PC-3 (cell line): ENCODE measurements at regions of chr4 and their contacts with region 1.

Region 1: GRCh38 chr4:13907255-13907751 is 279.8 kb upstream of the BOD1L1 start:
- DNase-seq: peak; percentile 91
- ATAC-seq: peak; percentile 95
- H3K4me3 ChIP-seq: 0 out of 2 replicates have a peak overlapping the region, but pooled peaks have one; percentile 18
- H3K27ac ChIP-seq: peak overlapping the region; percentile 99
- H3K4me1 ChIP-seq: peaks cover 51% of the 10 kb centered on the region
- H3K27me3 ChIP-seq: no peaks in the 10 kb centered on the region
- CTCF ChIP-seq: peak; percentile 72

Region 2: GRCh38 chr4:13700196-13701140 is 206.8 kb before region 1 on chr4:
- CTCF ChIA-PET with region 1: interaction called, 3 read pairs
- POLR2A ChIA-PET with region 1: interaction called, 3 read pairs
- intact Hi-C with region 1: loop called (anchors 1 kb)
- DNase-seq: peak; percentile 92
- ATAC-seq: peak; percentile 46
- H3K4me3 ChIP-seq: peak overlapping the region; percentile 33; the same call in 1 of the 2 replicates
- H3K27ac ChIP-seq: peak overlapping the region; percentile 96
- H3K4me1 ChIP-seq: peaks cover 62% of the 10 kb centered on the region
- H3K27me3 ChIP-seq: no peaks in the 10 kb centered on the region
- CTCF ChIP-seq: no peak

Region 3: GRCh38 chr4:13881892-13882291 is 25.4 kb before region 1 on chr4:
- CTCF ChIA-PET with region 1: interaction called, 12 read pairs
- POLR2A ChIA-PET with region 1: no interaction called
- intact Hi-C with region 1: no loop called
- DNase-seq: no peak
- ATAC-seq: no peak; the same call in 1 of the 2 replicates
- H3K4me3 ChIP-seq: no peak overlapping the region
- H3K27ac ChIP-seq: no peak overlapping the region
- H3K4me1 ChIP-seq: no peaks in the 10 kb centered on the region
- H3K27me3 ChIP-seq: no peaks in the 10 kb centered on the region
- CTCF ChIP-seq: no peak; the same call in 1 of the 2 replicates

Region 4: DNA sequence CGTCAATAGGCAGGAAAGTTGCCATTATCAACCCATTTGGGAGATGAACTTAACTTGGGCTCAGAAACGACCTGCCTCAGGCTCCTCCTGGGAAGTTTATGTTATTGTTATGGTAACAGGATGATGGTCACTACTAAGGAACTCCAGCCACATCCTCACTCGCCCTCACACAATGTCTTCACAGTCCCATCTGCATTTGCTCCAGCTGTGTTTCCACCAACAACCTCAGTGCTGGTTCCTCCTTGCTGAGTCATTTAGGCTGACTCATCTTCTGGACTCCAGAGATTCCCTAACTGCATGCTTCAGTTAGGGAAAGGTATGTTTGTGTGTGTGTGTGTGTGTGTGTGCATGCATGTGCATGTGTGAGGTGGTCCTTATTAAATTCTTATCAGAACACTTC is 13.6 kb after region 1 on chr4:
- CTCF ChIA-PET with region 1: no interaction called
- POLR2A ChIA-PET with region 1: interaction called, 5 read pairs
- intact Hi-C with region 1: loop called (anchors 2 kb)
- DNase-seq: peak; percentile 97
- ATAC-seq: peak; percentile 97
- H3K4me3 ChIP-seq: no peak overlapping the region
- H3K27ac ChIP-seq: peak overlapping the region; percentile 93
- H3K4me1 ChIP-seq: peaks cover 23% of the 10 kb centered on the region
- H3K27me3 ChIP-seq: no peaks in the 10 kb centered on the region
- CTCF ChIP-seq: no peak

Region 5: DNA sequence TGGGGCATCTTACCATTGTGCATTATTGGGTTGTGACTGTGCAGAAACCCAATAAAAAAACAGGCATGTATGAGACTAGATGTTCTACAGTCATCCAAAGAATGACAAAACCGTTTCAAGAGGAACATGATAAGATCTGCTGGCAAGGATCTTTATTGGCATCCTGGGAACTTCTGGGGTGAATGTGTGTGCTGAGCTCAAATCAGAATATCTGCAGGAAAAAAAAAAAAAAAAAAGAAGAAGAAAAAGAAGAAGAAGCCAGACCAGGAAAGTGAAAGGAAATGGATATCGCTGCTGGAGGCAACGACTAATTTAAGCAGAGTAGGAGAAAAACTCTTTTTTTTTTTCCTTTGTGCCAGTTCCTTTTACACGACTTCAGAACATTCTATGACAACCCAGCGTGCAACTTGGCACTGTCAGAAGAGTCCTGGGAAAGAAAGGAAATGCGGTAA is 204.5 kb after region 1 on chr4:
- CTCF ChIA-PET with region 1: no interaction called
- POLR2A ChIA-PET with region 1: interaction called, 6 read pairs
- intact Hi-C with region 1: loop called (anchors 2 kb)
- DNase-seq: peak; percentile 94
- ATAC-seq: peak; percentile 76
- H3K4me3 ChIP-seq: peak overlapping the region; percentile 72
- H3K27ac ChIP-seq: peak overlapping the region; percentile 93
- H3K4me1 ChIP-seq: peaks cover 19% of the 10 kb centered on the region
- H3K27me3 ChIP-seq: no peaks in the 10 kb centered on the region
- CTCF ChIP-seq: no peak

Region 6: GRCh38 chr4:14184265-14184664 is 277.0 kb after region 1 on chr4:
- CTCF ChIA-PET with region 1: no interaction called
- POLR2A ChIA-PET with region 1: no interaction called
- intact Hi-C with region 1: loop called (anchors 2 kb)
- DNase-seq: no peak
- ATAC-seq: no peak
- H3K4me3 ChIP-seq: no peak overlapping the region
- H3K27ac ChIP-seq: no peak overlapping the region
- H3K4me1 ChIP-seq: peaks cover 23% of the 10 kb centered on the region
- H3K27me3 ChIP-seq: no peaks in the 10 kb centered on the region
- CTCF ChIP-seq: no peak

Region 7: DNA sequence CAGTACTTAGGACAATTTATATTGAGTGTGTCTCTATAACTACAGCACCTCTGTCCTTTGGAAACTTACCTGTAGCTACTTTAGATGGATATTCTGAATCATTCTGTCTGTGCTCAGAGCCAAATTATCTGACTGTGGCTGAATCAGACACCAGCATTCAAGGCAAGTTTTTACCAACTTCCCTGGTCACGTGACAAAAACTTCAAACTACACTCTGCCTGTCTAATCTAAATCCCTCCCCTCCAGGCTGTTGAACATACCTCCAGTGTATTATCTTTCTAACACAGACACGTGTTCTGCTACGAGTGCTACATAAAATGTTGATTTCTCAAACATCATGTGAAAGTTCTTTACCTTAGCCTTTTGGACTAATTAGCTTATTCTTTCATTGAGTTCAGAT is 453.8 kb after region 1 on chr4:
- CTCF ChIA-PET with region 1: no interaction called
- POLR2A ChIA-PET with region 1: no interaction called
- intact Hi-C with region 1: no loop called
- DNase-seq: no peak
- ATAC-seq: no peak
- H3K4me3 ChIP-seq: no peak overlapping the region
- H3K27ac ChIP-seq: no peak overlapping the region
- H3K4me1 ChIP-seq: no peaks in the 10 kb centered on the region
- H3K27me3 ChIP-seq: no peaks in the 10 kb centered on the region
- CTCF ChIP-seq: no peak